Common myeloid progenitor, CD34-positive (primary cell): ENCODE measurements at regions of chr11 and their contacts with region 1.

Region 1: DNA sequence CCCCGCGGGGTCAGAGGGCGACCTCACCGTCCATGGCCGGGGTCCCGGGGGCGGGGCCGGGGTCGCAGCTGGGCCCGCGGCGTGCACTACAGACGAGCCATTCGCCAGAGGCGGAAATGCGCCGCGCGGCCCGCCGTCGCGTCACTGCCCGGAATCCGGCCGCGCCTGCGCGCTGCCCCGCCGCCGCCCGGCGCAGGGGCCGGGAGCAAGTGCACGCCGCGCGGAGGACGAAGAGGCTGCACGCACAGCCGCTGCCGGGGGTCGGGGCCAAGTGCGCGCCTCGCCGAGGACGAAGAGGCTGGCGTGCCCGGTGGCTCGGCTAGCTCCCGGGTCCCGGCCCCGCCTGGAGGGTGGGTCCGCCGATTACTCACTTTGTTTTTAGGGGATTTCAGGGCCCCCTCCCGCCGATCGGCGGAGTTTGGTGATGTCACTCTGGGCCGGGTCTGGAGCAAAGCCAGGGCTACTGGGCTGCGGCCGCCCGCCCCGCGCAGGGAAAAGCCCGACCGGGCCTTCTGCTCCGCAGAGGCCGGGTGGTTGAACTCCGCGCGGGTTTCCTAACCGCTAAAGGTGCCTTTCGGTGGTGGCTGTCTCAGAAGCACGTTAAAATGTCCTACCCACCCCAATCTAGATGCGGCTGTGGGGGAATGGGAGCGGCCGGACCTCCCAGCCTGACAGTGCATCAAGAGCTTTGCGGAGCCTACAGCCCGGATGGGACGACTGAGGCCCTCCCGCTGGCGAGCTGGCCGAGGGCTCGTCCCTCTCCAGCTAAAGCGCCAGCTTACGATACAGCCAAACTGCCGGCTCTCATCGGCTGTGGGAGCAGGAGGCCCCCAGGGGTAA is at the start of gene RELA:
- DNase-seq: peak; percentile 93 to 98 (median 97)
- H3K4me3 ChIP-seq: peak within 1 kb of the TSS; percentile 74 to 99 (median 95)
- H3K27ac ChIP-seq: peak within 1 kb of the TSS; percentile 95 to 98
- H3K4me1 ChIP-seq: peaks cover 2 to 26% (median 21%) of the 10 kb centered on the region in 4 experiments
- H3K27me3 ChIP-seq: no peaks in the 10 kb centered on the region

Region 2: DNA sequence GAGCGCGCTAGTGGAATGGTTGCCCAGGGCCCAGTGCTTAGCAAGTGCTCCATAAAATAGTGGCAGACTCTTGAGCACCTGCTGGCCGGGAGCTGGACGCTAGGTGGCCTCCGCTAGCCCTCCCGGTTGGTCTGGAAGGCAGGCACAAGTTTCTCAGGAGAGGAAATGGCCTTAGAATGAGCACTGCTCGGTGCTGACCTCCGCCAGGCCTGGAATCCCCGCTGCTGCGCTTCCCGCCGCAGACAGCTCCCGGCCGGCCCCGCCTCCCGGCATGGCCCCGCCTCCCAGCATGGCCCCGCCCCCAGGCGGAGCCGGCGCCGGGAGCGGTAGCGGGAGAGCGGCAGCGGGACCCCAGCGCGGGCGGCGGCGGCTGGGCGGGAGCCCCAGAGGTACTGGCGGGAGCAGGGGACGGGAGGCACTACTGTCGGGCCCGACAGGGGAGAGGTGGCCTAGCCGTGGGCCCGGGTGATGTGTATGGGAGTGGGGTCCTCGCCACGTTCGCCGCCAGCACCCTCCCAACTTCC is 25.2 kb before region 1 on chr11 and contains the start of gene SIPA1:
- CTCF ChIA-PET with region 1: interaction called, 18 read pairs
- POLR2A ChIA-PET with region 1: interaction called, 11 read pairs
- DNase-seq: peak in 2 of 3 donors; percentile 63 to 67
- H3K4me3 ChIP-seq: peak within 1 kb of the TSS; percentile 60 to 84 (median 79)
- H3K27ac ChIP-seq: peak within 1 kb of the TSS; percentile 33 to 84
- H3K4me1 ChIP-seq: peaks cover 5 to 82% (median 70%) of the 10 kb centered on the region in 4 experiments
- H3K27me3 ChIP-seq: no peaks in the 10 kb centered on the region

Region 3: GRCh38 chr11:65652511-65653231 is 10.3 kb before region 1 on chr11:
- CTCF ChIA-PET with region 1: interaction called, 5 read pairs
- POLR2A ChIA-PET with region 1: interaction called, 46 read pairs
- DNase-seq: peak; percentile 96 to 98 (median 97)
- H3K4me3 ChIP-seq: peak overlapping the region; percentile 20 to 78 (median 66)
- H3K27ac ChIP-seq: peak overlapping the region; percentile 93 to 94
- H3K4me1 ChIP-seq: peaks cover 13 to 42% (median 33%) of the 10 kb centered on the region in 4 experiments
- H3K27me3 ChIP-seq: no peaks in the 10 kb centered on the region

Region 4: DNA sequence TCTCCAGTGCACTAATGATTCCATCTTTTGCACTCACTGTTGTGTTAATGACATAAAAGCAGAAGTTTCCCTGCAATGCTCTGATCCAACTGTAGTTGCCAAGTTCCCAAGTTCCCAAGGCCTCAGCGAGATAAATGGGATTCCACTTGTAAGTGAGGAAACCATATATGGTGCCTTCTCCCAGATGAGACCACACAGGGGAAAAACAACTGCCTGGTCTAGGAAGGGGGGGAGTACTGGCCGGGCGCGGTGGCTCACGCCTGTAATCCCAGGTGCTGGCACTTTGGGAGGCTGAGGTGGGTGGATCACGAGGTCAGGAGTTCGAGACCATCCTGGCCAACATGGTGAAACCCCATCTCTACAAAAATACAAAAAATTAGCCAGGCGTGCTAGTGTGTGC is 23.0 kb after region 1 on chr11:
- CTCF ChIA-PET with region 1: no interaction called
- POLR2A ChIA-PET with region 1: no interaction called
- DNase-seq: no peak
- H3K4me3 ChIP-seq: no peak overlapping the region
- H3K27ac ChIP-seq: no peak overlapping the region
- H3K4me1 ChIP-seq: no peaks in the 10 kb centered on the region
- H3K27me3 ChIP-seq: no peaks in the 10 kb centered on the region

Region 5: DNA sequence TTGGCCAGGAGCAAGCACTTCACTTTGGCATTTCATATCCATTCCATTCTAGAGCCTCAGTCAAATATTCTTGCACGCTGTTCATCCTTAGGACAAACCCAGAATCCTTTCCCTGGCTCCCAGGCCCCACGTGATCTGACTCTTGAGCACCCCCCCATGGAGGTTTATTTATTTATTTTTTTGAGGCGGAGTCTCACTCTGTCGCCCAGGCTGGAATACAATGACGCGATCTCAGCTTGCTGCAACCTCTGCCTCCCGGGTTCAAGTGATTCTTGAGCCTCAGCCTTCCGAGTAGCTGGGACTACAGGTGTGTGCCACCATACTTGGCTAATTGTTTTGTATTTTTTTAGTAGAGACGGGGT is 269.5 kb after region 1 on chr11:
- CTCF ChIA-PET with region 1: no interaction called
- POLR2A ChIA-PET with region 1: no interaction called
- DNase-seq: no peak
- H3K4me3 ChIP-seq: no peak overlapping the region
- H3K27ac ChIP-seq: no peak overlapping the region
- H3K4me1 ChIP-seq: peaks cover 7 to 35% (median 33%) of the 10 kb centered on the region in 4 experiments
- H3K27me3 ChIP-seq: no peaks in the 10 kb centered on the region